ENCODE measurements at regions of chr19 and their contacts with region 1.

Region 1: GRCh38 chr19:12696366-12697335 is at the start of gene FBXW9:
- DNase-seq: peak; percentile 63
- H3K4me3 ChIP-seq: peak within 1 kb of the TSS; percentile 97
- CTCF ChIP-seq: no peak

Region 2: DNA sequence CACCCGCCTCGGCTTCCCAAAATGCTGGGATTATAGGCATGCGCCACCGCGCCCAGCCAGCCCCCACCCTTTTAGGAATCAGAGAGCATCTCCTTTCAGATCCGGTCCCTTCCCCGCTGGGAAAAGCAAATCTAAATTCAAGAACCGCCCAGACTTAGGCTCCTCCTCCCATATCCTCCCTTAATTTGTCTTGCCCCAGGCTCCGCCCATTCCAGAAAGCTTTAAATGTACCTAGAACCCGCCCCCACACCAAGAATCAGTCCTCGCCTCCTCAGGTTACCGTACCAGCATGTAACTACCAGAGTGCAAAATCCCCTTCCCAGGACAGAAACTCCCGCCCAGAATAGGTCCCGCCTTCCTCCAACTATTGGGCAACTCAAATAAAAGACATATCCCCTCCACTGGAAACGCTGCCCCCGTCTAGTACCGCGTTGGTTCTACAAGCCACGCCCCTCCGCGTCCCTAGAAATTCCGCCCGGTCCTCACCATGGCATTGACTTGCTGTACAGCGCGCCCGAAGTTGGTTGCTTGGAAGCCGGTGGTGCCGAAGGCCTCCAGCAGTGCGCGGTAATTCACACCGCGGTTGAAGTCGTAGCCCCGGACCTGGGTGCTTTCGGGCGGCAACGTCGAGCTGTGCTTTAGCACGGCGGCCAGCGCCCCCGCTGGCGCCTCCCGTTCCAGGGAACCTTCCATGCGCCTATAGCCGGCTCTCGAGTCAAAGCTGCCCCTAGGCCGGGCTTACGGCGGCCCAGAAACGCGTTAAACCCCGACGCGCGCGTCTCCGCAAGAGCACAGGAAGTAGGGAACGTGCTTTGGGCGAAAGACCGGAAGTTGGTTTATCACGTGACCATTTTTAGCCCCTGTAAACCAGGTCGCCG is 15.3 kb before region 1 on chr19 and contains the start of gene DHPS:
- CTCF ChIA-PET with region 1: interaction called, 10 read pairs
- POLR2A ChIA-PET with region 1: interaction called, 12 read pairs
- DNase-seq: peak; percentile 89
- H3K4me3 ChIP-seq: peak within 1 kb of the TSS; percentile 98
- CTCF ChIP-seq: no peak

Region 3: GRCh38 chr19:12711187-12711586 is 14.5 kb after region 1 on chr19:
- CTCF ChIA-PET with region 1: interaction called, 12 read pairs
- POLR2A ChIA-PET with region 1: interaction called, 7 read pairs
- DNase-seq: no peak
- H3K4me3 ChIP-seq: no peak overlapping the region
- CTCF ChIP-seq: no peak

Region 4: DNA sequence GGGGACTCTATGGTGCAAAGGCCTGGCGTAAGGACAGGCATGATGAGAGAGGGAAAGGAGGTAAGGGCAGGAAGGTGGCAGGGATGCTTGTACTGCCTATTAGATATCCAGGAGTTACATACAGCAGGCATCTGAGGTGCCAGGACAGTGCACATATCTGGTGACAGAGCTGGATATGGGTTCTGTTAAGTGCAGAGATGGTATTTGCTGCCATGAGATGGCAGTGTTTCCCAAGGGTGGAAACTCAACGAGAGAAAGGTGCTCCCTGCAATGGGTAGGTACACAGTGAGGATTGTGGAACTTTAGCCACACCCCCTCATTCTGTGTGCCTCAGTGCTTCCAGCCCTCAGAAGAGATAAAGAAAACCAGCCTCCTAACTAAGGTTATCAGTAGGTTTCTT is 20.2 kb after region 1 on chr19:
- CTCF ChIA-PET with region 1: interaction called, 12 read pairs
- POLR2A ChIA-PET with region 1: interaction called, 4 read pairs
- DNase-seq: no peak
- H3K4me3 ChIP-seq: no peak overlapping the region
- CTCF ChIP-seq: peak; percentile 12

Region 5: GRCh38 chr19:12727745-12728433 is 31.2 kb after region 1 on chr19:
- CTCF ChIA-PET with region 1: no interaction called
- POLR2A ChIA-PET with region 1: no interaction called
- DNase-seq: no peak
- H3K4me3 ChIP-seq: no peak overlapping the region
- CTCF ChIP-seq: no peak

Measured in AG04449 (cell line).